ENCODE measurements at regions of chr10 and their contacts with region 1.

Region 1: GRCh38 chr10:7260412-7260900 is 150.4 kb downstream of the SFMBT2 start:
- DNase-seq: peak; percentile 53
- H3K4me3 ChIP-seq: no peak overlapping the region
- H3K27ac ChIP-seq: no peak overlapping the region
- H3K4me1 ChIP-seq: peaks cover 7% of the 10 kb centered on the region
- H3K27me3 ChIP-seq: no peaks in the 10 kb centered on the region
- CTCF ChIP-seq: peak; percentile 50 to 53

Region 2: GRCh38 chr10:7111561-7111960 is 148.9 kb before region 1 on chr10:
- CTCF ChIA-PET with region 1: no interaction called
- dilution Hi-C with region 1: no loop called
- in situ Hi-C with region 1: no loop called
- intact Hi-C with region 1: loop called (anchors 5 kb)
- DNase-seq: peak; percentile 86
- H3K4me3 ChIP-seq: no peak overlapping the region
- H3K27ac ChIP-seq: no peak overlapping the region
- H3K4me1 ChIP-seq: no peaks in the 10 kb centered on the region
- H3K27me3 ChIP-seq: no peaks in the 10 kb centered on the region
- CTCF ChIP-seq: no peak

Region 3: GRCh38 chr10:7329219-7329618 is 68.8 kb after region 1 on chr10:
- CTCF ChIA-PET with region 1: no interaction called
- dilution Hi-C with region 1: no loop called
- in situ Hi-C with region 1: no loop called
- intact Hi-C with region 1: no loop called
- DNase-seq: no peak
- H3K4me3 ChIP-seq: no peak overlapping the region
- H3K27ac ChIP-seq: no peak overlapping the region
- H3K4me1 ChIP-seq: no peaks in the 10 kb centered on the region
- H3K27me3 ChIP-seq: no peaks in the 10 kb centered on the region
- CTCF ChIP-seq: no peak